ENCODE measurements at regions of chr4 and their contacts with region 1.

Region 1: GRCh38 chr4:112231779-112232713 is at the start of gene AP1AR:
- DNase-seq: peak; percentile 73
- ATAC-seq: peak; percentile 95
- H3K4me3 ChIP-seq: peak within 1 kb of the TSS; percentile 86 to 99 (median 96)
- H3K27ac ChIP-seq: peak within 1 kb of the TSS; percentile 100
- H3K4me1 ChIP-seq: peaks cover 47% of the 10 kb centered on the region
- H3K27me3 ChIP-seq: no peaks in the 10 kb centered on the region; a peak in 1 of 5 replicates
- CTCF ChIP-seq: peak; percentile 69
- EP300 ChIP-seq: no peak
- POLR2A ChIP-seq: peak; percentile 97 to 99
- RAD21 ChIP-seq: peak; percentile 54
- total RNA-seq, gene AP1AR: 39.9 and 43.5 TPM in 2 replicates

Region 2: DNA sequence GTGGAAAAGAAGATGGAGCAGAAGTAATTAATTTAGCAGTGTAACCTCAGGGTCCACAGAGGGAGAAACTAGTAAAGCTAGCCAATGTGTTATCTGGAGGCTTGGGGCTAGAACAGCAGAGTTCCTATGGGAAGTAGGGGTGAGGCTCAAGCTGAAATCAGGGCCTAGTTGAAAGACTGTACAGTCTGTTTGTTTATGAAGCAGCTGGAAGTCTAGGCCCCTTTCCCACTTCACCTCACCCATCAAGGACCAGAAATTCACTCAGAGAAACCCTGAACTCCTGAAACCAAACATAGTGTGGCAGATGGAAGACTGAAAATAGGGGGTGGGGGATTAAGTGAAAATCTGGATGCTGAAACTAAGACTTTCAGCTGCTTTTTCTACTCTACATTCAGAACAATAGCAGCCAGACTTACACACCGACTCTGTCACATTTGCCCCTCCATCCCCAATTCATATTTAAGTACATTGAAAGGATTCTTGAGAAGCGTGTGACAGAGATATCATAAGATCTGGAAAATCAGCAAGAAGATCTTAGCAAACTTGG is 119.4 kb before region 1 on chr4:
- CTCF ChIA-PET with region 1: no interaction called
- POLR2A ChIA-PET with region 1: interaction called, 12 read pairs
- in situ Hi-C with region 1: no loop called
- intact Hi-C with region 1: no loop called
- DNase-seq: peak; percentile 14
- ATAC-seq: peak; percentile 63
- H3K4me3 ChIP-seq: no peak overlapping the region; a peak in 1 of 6 replicates
- H3K27ac ChIP-seq: no peak overlapping the region
- H3K4me1 ChIP-seq: peaks cover 34% of the 10 kb centered on the region
- H3K27me3 ChIP-seq: peaks cover 0 to 4% of the 10 kb centered on the region in 2 experiments; a peak in 2 of 5 replicates
- CTCF ChIP-seq: no peak
- EP300 ChIP-seq: no peak
- POLR2A ChIP-seq: no peak
- RAD21 ChIP-seq: no peak

Region 3: GRCh38 chr4:112145326-112145819 is 86.7 kb before region 1 on chr4 and contains the start of gene FAM241A:
- CTCF ChIA-PET with region 1: no interaction called
- POLR2A ChIA-PET with region 1: interaction called, 3 read pairs
- in situ Hi-C with region 1: no loop called
- intact Hi-C with region 1: loop called (anchors 1 kb)
- DNase-seq: peak; percentile 29
- ATAC-seq: peak; percentile 97
- H3K4me3 ChIP-seq: peak within 1 kb of the TSS; percentile 70 to 99 (median 84)
- H3K27ac ChIP-seq: peak within 1 kb of the TSS; percentile 58
- H3K4me1 ChIP-seq: peaks cover 31% of the 10 kb centered on the region
- H3K27me3 ChIP-seq: no peaks in the 10 kb centered on the region; a peak in 1 of 5 replicates
- CTCF ChIP-seq: peak; percentile 16; the same call in 1 of the 2 replicates
- EP300 ChIP-seq: no peak
- POLR2A ChIP-seq: peak in 1 of 2 experiments; percentile 75; a peak in 2 of 4 replicates
- RAD21 ChIP-seq: peak; percentile 43; the same call in 1 of the 2 replicates
- total RNA-seq, gene FAM241A: 0.69 and 0.74 TPM in 2 replicates

Region 4: DNA sequence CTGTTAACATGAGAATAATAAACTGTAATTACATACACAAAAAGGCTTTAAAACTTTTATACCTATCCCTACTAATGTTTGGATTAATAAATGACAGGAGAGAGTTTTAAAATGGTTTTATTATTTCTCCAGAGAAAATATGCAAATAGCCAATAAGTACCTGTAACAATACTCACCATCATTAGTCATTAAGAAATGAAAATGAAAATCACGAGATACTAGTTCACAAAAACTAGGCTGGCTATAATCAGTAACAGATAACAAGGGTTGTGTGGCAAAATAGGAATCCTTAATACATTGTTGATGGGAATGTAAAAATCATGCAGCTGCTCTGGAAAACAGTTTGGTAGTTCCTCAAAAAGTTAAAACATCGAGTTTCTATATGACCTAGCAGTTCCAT is 25.6 kb before region 1 on chr4:
- CTCF ChIA-PET with region 1: no interaction called
- POLR2A ChIA-PET with region 1: interaction called, 25 read pairs
- in situ Hi-C with region 1: no loop called
- intact Hi-C with region 1: loop called (anchors 1 kb)
- DNase-seq: no peak
- ATAC-seq: no peak
- H3K4me3 ChIP-seq: no peak overlapping the region
- H3K27ac ChIP-seq: no peak overlapping the region
- H3K4me1 ChIP-seq: peaks cover 64% of the 10 kb centered on the region
- H3K27me3 ChIP-seq: no peaks in the 10 kb centered on the region
- CTCF ChIP-seq: no peak
- EP300 ChIP-seq: no peak
- POLR2A ChIP-seq: no peak
- RAD21 ChIP-seq: no peak

Region 5: GRCh38 chr4:112214390-112215264 is 17.4 kb before region 1 on chr4:
- CTCF ChIA-PET with region 1: interaction called, 14 read pairs
- POLR2A ChIA-PET with region 1: interaction called, 14 read pairs
- in situ Hi-C with region 1: no loop called
- intact Hi-C with region 1: loop called (anchors 1 kb)
- DNase-seq: peak; percentile 51
- ATAC-seq: 0 out of 3 replicates have a peak, but pooled peaks have one; percentile 35
- H3K4me3 ChIP-seq: no peak overlapping the region
- H3K27ac ChIP-seq: no peak overlapping the region
- H3K4me1 ChIP-seq: peaks cover 27% of the 10 kb centered on the region
- H3K27me3 ChIP-seq: no peaks in the 10 kb centered on the region
- CTCF ChIP-seq: peak; percentile 50
- EP300 ChIP-seq: no peak
- POLR2A ChIP-seq: no peak
- RAD21 ChIP-seq: peak; percentile 44; the same call in 1 of the 2 replicates